HCT116 (cell line): ENCODE measurements at regions of chr4 and their contacts with region 1.

Region 1: DNA sequence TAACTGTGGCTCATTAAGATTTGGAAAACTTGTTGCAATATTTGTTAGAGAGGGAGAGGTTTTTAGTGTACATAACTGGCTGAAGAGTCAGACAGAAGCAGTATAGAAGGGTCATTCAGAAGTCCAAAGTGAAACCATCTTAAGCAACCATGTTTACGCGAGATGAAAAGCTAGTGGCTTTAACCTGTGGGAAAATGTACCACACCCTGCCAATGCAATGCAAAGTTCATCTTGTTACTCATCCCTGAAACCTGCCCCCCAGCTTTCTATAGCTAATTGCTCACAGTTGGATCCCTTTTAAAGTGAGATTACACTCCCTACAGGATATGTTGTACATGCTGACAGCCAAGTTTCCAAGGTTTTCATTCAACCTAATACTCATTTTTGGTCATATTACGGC is 96.7 kb upstream of the RAPGEF2 start:
- DNase-seq: peak; percentile 75
- ATAC-seq: peak; percentile 87
- H3K4me3 ChIP-seq: peak overlapping the region; percentile 4 to 49; a peak in 3 of 4 replicates
- H3K27ac ChIP-seq: no peak overlapping the region
- H3K4me1 ChIP-seq: peaks cover 6 to 30% of the 10 kb centered on the region in 2 experiments; a peak in 2 of 4 replicates
- H3K27me3 ChIP-seq: no peaks in the 10 kb centered on the region
- CTCF ChIP-seq: no peak
- POLR2A ChIP-seq: no peak
- RAD21 ChIP-seq: peak; percentile 24; the same call in 1 of the 2 replicates

Region 2: DNA sequence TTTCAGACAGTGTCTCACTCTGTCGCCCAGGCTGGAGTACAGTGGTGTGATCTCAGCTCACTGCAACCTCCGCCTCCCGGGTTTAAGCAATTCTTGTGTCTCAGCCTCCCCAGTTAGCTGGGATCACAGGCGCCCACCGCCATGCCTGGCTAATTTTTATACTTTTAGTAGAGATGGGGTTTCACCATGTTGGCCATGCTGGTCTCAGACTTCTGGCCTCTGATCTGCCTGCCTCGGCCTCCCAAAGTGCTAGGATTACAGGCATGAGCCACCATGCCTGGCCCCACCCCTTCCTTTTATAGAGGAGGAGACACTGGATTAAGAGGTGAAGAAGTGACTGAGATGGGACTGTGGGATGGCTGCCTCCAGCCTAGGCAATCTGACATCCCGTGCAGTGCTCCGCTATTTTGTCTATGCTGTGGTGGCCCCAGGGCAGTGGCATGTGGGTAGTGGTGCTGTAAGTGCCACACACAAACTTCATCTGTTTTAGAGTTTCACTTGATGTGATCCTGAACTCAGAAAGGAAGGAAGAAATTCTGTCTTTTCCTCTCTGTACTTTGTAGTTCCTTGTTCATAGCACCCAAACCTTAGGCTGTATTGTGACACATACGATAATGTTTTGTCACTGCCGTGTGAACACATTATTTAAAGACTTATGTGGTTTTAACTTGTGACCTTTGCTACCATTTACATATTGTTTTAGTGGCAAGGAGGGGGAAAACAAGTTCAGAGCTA is 188.5 kb before region 1 on chr4:
- CTCF ChIA-PET with region 1: no interaction called
- POLR2A ChIA-PET with region 1: no interaction called
- RAD21 ChIA-PET with region 1: no interaction called
- intact Hi-C with region 1: no loop called
- DNase-seq: no peak
- ATAC-seq: no peak
- H3K4me3 ChIP-seq: no peak overlapping the region
- H3K27ac ChIP-seq: no peak overlapping the region
- H3K4me1 ChIP-seq: no peaks in the 10 kb centered on the region
- H3K27me3 ChIP-seq: no peaks in the 10 kb centered on the region
- CTCF ChIP-seq: no peak
- POLR2A ChIP-seq: no peak
- RAD21 ChIP-seq: no peak

Region 3: DNA sequence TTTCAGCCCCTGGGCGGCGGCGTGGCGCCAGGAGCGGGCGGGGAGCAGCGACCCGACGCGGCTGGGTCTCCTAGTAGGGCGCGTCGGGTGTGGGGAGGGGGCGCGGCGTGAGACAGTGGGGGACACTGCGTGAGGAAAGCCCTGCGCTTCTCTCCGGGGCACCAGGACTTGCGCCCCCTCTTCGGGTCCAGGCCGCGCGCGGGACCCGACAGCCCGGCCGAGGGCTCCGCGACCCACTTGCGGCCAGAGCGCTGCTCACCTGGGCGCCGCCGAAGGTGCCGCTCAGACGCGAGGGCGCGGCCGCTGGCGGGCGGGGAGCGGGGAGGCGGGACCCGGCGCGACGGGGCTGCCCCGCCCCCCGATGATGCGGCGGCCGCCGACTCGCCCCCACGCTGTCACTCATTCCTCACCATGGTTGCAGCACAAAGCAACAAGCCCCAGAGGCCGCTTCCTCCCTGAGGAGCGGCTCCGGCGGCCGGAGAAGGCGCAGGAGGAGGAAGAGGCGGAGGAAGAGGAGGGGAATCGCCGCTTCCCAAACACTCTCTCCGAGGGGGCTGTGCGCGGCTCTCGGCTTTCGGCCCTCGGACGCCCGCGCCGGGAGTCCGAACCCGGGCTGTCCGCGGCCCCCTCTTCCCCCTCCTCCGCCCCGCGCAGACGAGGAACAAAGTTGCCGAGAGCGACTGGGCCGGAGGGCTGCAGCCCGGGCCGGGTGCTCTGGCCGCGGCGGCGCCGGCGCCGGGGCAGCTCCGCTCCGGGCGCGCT is 96.6 kb after region 1 on chr4 and contains the start of gene RAPGEF2:
- CTCF ChIA-PET with region 1: no interaction called
- POLR2A ChIA-PET with region 1: no interaction called
- RAD21 ChIA-PET with region 1: no interaction called
- intact Hi-C with region 1: loop called (anchors 5 kb)
- DNase-seq: peak; percentile 89
- ATAC-seq: peak; percentile 89
- H3K4me3 ChIP-seq: peak within 1 kb of the TSS; percentile 72 to 82
- H3K27ac ChIP-seq: peak within 1 kb of the TSS; percentile 76
- H3K4me1 ChIP-seq: peaks cover 4 to 17% of the 10 kb centered on the region in 2 experiments; a peak in 3 of 4 replicates
- H3K27me3 ChIP-seq: no peaks in the 10 kb centered on the region
- CTCF ChIP-seq: no peak
- POLR2A ChIP-seq: peak; percentile 36
- RAD21 ChIP-seq: no peak
- total RNA-seq, gene RAPGEF2: 21.2 TPM